Ascending aorta (tissue), 2 donors: ENCODE measurements at regions of chr12 and their contacts with region 1.

Region 1: DNA sequence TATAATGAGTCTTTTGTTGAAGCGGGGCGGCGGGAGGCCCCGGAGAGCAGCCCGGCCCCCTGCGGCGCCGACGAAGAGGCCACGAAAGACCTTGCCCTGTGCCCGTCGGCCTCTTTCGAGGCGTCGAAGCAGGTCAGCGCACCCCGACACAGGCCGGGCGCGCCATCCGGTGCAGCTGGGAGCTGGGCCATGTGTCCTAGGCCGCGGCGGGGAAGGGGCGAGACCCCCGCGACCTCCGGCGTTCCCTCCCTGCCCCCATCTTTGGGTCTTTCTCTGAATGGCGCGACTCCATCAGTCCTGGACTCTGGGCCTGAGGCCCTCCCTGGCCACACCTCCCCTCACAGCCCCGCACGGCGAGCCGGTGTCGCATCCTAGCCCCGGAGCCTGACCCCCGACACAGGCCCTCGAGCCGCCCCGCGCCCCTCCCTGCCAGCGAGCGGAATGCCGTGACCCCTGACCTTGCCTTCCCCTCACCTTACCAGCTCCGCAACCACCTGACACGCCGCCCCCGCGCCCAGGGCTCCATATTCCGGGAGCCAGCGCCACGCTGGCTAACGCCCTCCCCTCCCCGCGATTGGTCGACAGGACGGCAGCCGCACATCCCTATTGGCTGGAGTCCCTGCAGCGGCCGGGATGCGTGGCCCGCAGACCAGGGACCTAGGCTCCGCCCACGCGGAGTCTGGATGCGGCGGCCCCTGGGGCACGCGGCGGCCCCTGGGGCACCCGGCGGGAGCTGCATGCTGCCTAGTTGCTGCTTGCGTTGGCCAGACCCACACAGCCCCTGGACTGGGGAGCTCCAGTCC is at the start of gene SLC11A2:
- DNase-seq: peak; percentile 84 to 98
- H3K4me3 ChIP-seq: peak within 1 kb of the TSS; percentile 68 to 94
- H3K27ac ChIP-seq: peak within 1 kb of the TSS; percentile 91 to 98
- H3K4me1 ChIP-seq: peaks cover 6 to 17% of the 10 kb centered on the region in 2 donors
- H3K27me3 ChIP-seq: no peaks in the 10 kb centered on the region
- CTCF ChIP-seq: peak in 1 of 3 experiments; percentile 18
- total RNA-seq, gene SLC11A2: 21.5 TPM

Region 2: DNA sequence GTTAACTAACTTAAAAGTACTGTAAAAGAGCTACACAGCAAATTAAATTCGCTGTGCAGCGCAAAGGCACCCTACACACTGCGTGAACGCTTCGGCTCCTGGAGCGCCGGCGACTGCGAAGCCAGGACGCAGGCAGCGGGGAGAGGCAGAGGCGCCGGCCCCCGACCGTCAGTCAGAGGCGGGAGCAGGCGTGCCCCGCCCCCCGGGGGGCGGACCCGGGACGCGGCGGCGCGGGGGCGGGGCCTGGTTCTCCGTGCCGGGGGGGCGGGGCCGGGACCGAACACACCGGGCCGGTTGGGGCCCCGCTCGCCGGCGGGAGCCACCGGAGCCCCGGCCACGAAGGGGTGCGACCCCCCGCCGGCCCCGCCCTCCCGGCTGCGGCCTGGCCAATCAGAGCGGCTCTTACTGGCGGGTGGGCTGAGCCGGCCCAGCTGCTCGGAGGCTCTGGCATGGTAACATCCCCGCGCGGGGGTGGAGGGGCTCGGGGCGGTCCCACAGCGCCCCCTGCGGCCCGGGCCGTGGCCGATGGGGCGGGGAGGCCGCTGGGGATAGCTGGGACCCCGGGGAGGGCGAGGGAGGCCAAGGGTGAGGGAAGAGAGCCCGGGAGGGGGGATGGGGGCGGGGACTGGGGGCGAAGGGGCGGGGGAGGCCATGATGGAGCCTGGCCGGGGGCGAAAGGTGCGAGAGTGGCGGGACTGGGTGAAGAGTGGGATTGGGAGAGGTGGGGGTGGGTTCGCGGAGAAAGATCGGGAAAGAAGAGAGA is 1402.7 kb before region 1 on chr12 and contains the start of gene PRPF40B:
- intact Hi-C with region 1: loop called (anchors 5 kb)
- DNase-seq: peak; percentile 49 to 93
- H3K4me3 ChIP-seq: peak within 1 kb of the TSS; percentile 49 to 77
- H3K27ac ChIP-seq: peak within 1 kb of the TSS; percentile 89 to 96
- H3K4me1 ChIP-seq: peaks cover 6 to 11% of the 10 kb centered on the region in 2 donors
- H3K27me3 ChIP-seq: no peaks in the 10 kb centered on the region
- CTCF ChIP-seq: peak; percentile 49 to 60 (median 58)
- total RNA-seq, gene PRPF40B: 9.5 TPM

Region 3: GRCh38 chr12:50763639-50764285 is 262.3 kb before region 1 on chr12 and contains the start of gene ATF1:
- intact Hi-C with region 1: loop called (anchors 2 kb)
- DNase-seq: peak; percentile 73 to 96
- H3K4me3 ChIP-seq: peak within 1 kb of the TSS; percentile 83 to 94
- H3K27ac ChIP-seq: peak within 1 kb of the TSS; percentile 96 to 98
- H3K4me1 ChIP-seq: peaks cover 0 to 15% of the 10 kb centered on the region in 2 donors
- H3K27me3 ChIP-seq: no peaks in the 10 kb centered on the region
- CTCF ChIP-seq: no peak
- total RNA-seq, gene ATF1: 6.8 TPM

Region 4: GRCh38 chr12:50924439-50925341 is 101.3 kb before region 1 on chr12:
- intact Hi-C with region 1: loop called (anchors 2 kb)
- DNase-seq: peak; percentile 63 to 96
- H3K4me3 ChIP-seq: peak overlapping the region; percentile 75 to 80
- H3K27ac ChIP-seq: peak overlapping the region; percentile 79 to 82
- H3K4me1 ChIP-seq: peaks cover 0 to 24% of the 10 kb centered on the region in 2 donors
- H3K27me3 ChIP-seq: no peaks in the 10 kb centered on the region
- CTCF ChIP-seq: no peak

Region 5: DNA sequence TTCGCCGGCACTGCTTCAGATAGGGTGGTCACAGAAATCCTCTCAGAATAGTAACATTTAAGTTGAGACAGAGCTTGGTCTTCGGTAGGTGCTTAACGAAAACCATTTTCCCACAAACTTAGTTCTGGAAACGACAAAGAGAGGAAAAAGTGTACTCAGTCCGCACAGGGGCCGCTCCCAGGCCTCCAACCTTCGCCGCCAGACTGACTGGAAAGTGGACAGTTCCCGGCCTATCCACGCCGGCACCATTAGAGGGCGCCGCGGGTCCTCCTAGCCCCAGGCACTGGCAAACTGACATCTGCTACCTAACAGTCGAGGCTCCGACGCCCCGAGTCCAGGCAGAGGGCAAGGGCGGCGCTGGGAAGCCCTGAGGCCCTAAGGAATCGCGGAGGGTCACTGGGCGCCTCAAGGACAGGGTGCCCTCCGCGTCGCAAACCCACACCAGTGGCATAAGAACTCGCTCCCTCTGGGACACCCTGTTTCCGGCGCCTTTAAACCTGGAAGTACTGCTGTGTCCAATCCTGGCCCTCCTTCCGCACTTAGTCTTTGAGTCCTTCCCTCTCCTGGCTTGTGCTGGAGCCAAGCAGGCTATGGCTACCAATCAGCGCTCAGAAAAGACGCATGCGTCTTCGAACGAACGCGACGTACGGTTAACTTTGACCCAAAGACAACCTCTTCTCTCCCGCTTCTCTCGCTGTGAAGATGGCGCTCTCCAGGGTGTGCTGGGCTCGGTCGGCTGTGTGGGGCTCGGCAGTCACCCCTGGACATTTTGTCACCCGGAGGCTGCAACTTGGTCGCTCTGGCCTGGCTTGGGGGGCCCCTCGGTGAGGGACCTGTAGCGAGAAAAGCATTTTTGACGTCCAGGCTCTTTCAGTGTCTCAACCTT is 21.9 kb after region 1 on chr12 and contains the start of gene LETMD1:
- intact Hi-C with region 1: loop called (anchors 1 kb)
- DNase-seq: peak; percentile 87 to 97
- H3K4me3 ChIP-seq: peak within 1 kb of the TSS; percentile 93 to 95
- H3K27ac ChIP-seq: peak within 1 kb of the TSS; percentile 94 to 95
- H3K4me1 ChIP-seq: peaks cover 8 to 17% of the 10 kb centered on the region in 2 donors
- H3K27me3 ChIP-seq: no peaks in the 10 kb centered on the region
- CTCF ChIP-seq: peak; percentile 85 to 93 (median 91)
- total RNA-seq, gene LETMD1: 8.6 TPM

Region 6: GRCh38 chr12:51172515-51173431 is 146.7 kb after region 1 on chr12 and contains the start of gene TFCP2:
- intact Hi-C with region 1: loop called (anchors 2 kb)
- DNase-seq: peak; percentile 91 to 98
- H3K4me3 ChIP-seq: peak within 1 kb of the TSS; percentile 85 to 94
- H3K27ac ChIP-seq: peak within 1 kb of the TSS; percentile 91 to 100
- H3K4me1 ChIP-seq: peaks cover 6% of the 10 kb centered on the region in 2 donors
- H3K27me3 ChIP-seq: no peaks in the 10 kb centered on the region
- CTCF ChIP-seq: no peak
- total RNA-seq, gene TFCP2: 3.0 TPM